Sciatic nerve (tissue), 2 donors: ENCODE measurements at regions of chr21 and their contacts with region 1.

Region 1: DNA sequence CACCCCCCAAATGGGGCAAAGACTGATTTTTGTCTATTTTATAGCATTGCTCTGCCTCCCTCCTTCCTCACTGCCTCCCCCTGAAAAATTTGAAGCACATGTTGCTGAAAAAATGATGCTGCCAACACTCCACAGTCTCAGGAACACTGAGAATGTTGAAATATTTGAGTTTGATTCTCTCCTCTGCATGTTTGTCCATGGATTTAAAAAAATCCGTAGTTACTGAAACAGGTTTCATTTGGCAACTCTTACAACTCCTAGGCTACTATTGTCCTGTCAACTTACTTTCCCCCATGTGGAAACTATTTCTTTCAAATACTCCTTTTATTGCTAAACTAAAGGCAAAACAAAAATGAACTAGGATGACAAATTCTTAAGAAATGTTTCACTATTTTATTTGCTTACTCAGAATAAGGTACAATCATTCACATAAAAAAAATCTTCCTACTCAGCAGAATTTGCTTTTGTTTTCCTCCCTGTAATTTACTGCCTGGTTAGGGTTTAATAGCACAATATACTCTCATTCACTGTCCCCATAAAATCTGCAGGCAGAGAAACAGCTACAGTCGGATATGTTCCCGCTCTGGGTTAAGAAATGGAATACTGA is 50.2 kb downstream of the C21orf91 start:
- DNase-seq: no peak
- ATAC-seq: peak; percentile 38

Region 2: GRCh38 chr21:17089091-17089502 is 679.8 kb before region 1 on chr21:
- intact Hi-C with region 1: loop called (anchors 5 kb)
- DNase-seq: no peak
- ATAC-seq: no peak

Region 3: DNA sequence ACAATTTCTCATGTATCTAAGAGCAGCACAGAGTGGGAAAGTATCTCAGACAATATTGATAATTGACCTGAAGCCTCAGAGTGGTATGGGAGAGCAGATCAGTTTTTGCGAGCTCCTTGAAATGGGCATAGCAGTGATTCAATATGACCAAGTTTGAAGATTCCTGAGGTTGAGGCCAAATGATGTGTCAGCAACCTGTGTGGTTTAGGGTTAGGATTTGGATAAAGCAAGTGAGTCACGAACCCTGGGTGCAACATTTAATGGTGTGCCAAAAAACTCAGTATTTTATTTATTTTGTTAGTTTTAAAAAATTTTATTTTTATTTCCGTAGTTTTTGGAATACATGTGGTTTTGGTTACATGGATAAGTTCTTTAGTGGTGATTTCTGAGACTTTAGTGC is 142.7 kb after region 1 on chr21:
- intact Hi-C with region 1: no loop called
- DNase-seq: no peak
- ATAC-seq: peak; percentile 90